Activated CD4-positive, alpha-beta T cell treated with anti-CD3 and anti-CD28 coated beads for 36 hours (primary cell): ENCODE measurements at regions of chr2 and their contacts with region 1.

Region 1: DNA sequence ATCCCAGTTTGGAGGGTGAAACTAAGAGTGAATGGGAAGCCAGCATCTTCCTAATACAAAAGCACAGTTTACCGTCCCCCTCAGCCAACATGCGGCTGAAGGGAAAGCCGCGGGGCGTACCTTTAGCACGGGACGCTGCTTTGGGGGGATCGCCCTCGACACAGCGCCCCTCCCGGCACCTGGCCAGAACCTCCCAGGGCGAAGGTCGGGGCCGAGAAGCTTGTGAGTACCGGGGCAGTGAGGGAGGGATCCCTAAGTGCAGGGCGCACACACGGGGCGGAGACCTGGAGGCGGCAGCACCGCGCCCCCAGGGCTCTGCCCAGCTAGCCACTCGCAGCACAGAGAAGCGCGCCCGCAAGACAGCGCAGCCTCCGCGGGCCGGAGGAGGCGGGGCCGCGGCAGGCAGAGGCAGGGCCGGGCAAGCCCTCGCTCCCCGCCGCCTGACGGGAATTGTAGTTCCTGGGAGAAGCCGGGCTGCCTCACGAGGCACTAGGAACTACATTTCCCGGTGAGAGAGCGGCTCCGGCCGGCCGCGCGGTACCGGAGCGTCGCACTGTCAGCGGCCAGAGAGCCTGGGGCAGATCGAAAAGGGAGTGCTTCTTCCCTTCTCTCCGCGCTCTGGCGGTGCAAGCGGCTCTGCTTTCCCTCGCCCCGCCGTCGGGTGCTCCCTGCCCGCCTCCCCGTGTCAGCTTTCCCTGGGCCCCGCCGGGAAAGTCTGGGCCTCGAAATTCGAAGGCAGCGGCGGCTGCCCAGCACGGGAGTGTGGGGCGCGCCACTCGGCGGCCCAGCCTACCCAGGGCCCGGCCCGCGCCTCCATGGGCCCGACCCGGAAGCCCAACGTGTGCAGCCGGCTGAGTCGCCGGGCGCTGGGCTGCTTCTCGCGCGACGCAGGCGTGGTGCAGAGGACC is at the starts of genes DCAF17 and METTL8:
- DNase-seq: peak; percentile 97
- ATAC-seq: peak; percentile 91
- H3K4me3 Mint-ChIP-seq: peak within 1 kb of the TSS; percentile 93
- H3K27ac Mint-ChIP-seq: peak within 1 kb of the TSS; percentile 95
- H3K4me1 Mint-ChIP-seq: peaks cover 50% of the 10 kb centered on the region
- H3K27me3 Mint-ChIP-seq: no peaks in the 10 kb centered on the region
- total RNA-seq, gene DCAF17: 18.3 TPM
- total RNA-seq, gene METTL8: 39.5 to 47.9 TPM

Region 2: DNA sequence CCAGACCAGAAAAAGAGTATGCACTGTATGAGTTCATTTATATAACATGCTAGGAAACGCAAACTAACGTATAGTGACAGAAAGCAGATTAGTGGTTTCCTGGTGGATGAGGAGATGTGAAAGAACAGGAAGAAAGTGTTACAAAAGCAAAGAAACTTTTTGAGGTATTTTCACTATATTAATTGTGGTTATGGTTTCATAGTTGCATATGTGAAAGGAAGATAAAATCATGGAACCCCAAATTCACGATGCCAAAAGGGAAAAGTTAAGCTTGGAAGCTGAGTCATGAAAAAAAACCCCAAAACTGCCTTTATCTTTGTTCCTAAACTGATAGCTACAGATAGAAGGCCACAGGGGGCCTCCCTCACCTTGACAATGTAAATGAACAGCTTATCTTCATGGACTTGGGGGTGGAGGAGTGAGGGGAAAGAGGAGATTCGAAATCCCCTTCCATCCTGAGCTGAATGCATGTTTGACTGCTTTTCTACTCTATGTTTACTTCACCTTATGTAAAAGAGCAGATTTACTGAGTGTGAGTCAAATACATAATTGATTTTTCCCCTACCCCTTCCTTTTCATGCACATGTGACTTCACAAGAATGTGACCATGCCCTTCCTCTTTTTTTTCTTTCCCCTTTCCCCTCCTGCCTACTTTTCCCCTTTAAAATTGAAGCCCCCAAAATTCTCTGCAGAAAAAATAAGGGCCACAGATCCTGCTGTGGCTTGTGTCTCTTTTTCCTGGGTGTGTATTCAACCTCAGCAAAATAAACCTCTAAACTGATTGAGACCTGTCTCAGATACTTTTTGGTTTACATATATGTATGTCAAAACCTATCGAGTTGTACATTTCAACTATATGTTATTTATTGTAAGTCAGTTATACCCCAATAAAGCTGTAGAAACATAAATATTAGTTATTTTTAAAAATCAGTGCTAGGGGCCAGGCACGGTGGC is 173.3 kb before region 1 on chr2:
- CTCF ChIA-PET with region 1: no interaction called
- POLR2A ChIA-PET with region 1: no interaction called
- intact Hi-C with region 1: loop called (anchors 5 kb)
- DNase-seq: peak; percentile 50
- ATAC-seq: peak; percentile 90
- H3K4me3 Mint-ChIP-seq: peak overlapping the region; percentile 34
- H3K27ac Mint-ChIP-seq: peak overlapping the region; percentile 64
- H3K4me1 Mint-ChIP-seq: peaks cover 34% of the 10 kb centered on the region
- H3K27me3 Mint-ChIP-seq: no peaks in the 10 kb centered on the region

Region 3: GRCh38 chr2:171365232-171365631 is 68.8 kb before region 1 on chr2:
- CTCF ChIA-PET with region 1: no interaction called
- POLR2A ChIA-PET with region 1: no interaction called
- intact Hi-C with region 1: no loop called
- DNase-seq: no peak
- ATAC-seq: no peak
- H3K4me3 Mint-ChIP-seq: no peak overlapping the region
- H3K27ac Mint-ChIP-seq: no peak overlapping the region
- H3K4me1 Mint-ChIP-seq: no peaks in the 10 kb centered on the region
- H3K27me3 Mint-ChIP-seq: no peaks in the 10 kb centered on the region

Region 4: DNA sequence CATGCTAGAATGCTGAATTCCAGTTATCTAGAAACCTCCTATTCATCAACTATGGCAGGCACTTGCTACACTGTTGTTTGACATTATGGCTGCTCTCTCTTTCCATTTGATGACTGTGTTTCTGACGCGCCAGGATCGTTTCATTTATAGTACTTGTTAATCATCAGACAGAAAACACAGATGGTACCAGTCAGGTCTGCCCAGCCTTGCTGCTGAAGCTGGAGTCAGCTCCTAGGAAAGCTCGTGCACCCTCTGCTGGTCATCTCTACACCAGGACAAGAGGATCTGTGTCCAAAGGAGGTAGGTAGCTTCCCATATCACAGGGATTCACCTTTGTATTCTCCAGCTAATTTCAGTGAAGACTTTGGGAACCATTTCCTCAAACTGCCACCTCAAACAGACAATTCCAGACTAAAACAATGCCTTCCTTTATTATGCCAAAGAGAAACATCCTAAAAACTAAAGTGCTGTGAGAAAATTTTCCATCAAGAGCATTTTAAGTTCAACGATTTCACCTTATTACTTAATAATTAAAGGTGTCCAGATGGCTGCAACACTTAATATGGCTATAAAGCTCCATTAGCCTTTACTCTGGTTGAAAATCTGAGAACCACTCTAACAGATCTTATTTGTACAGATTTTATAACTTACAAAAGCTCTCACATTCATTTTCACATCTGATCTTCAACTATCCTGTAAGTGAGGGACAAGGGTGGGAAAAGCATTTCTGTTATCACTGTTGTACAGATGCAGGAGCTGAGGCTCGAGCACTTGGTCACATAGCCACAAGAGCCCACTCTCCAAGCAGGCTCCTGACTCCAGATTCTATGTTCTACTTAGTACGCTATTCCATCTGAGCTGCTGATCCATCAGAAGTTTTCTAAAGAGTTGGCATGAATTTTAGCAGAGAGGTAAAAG is 17.7 kb before region 1 on chr2:
- CTCF ChIA-PET with region 1: interaction called, 41 read pairs
- POLR2A ChIA-PET with region 1: interaction called, 3 read pairs
- intact Hi-C with region 1: loop called (anchors 1 kb)
- DNase-seq: peak; percentile 93
- ATAC-seq: peak; percentile 98
- H3K4me3 Mint-ChIP-seq: peak overlapping the region; percentile 24
- H3K27ac Mint-ChIP-seq: peak overlapping the region; percentile 84
- H3K4me1 Mint-ChIP-seq: peaks cover 37% of the 10 kb centered on the region
- H3K27me3 Mint-ChIP-seq: no peaks in the 10 kb centered on the region

Region 5: GRCh38 chr2:171893824-171894611 is 460.0 kb after region 1 on chr2 and contains the start of gene SLC25A12:
- CTCF ChIA-PET with region 1: no interaction called
- POLR2A ChIA-PET with region 1: no interaction called
- intact Hi-C with region 1: loop called in 1 of 2 experiments (anchors 2 kb)
- DNase-seq: peak; percentile 88
- ATAC-seq: peak; percentile 98
- H3K4me3 Mint-ChIP-seq: peak within 1 kb of the TSS; percentile 100
- H3K27ac Mint-ChIP-seq: peak within 1 kb of the TSS; percentile 98
- H3K4me1 Mint-ChIP-seq: peaks cover 30% of the 10 kb centered on the region
- H3K27me3 Mint-ChIP-seq: no peaks in the 10 kb centered on the region
- total RNA-seq, gene SLC25A12: 19.5 to 22.4 TPM

Region 6: GRCh38 chr2:171922230-171923022 is 488.4 kb after region 1 on chr2 and contains the start of gene HAT1:
- CTCF ChIA-PET with region 1: no interaction called
- POLR2A ChIA-PET with region 1: no interaction called
- intact Hi-C with region 1: loop called in 1 of 2 experiments (anchors 10 kb)
- DNase-seq: peak; percentile 99
- ATAC-seq: peak; percentile 96
- H3K4me3 Mint-ChIP-seq: peak within 1 kb of the TSS; percentile 94
- H3K27ac Mint-ChIP-seq: peak within 1 kb of the TSS; percentile 98
- H3K4me1 Mint-ChIP-seq: peaks cover 38% of the 10 kb centered on the region
- H3K27me3 Mint-ChIP-seq: no peaks in the 10 kb centered on the region
- total RNA-seq, gene HAT1: 88.5 to 92.6 TPM

Region 7: DNA sequence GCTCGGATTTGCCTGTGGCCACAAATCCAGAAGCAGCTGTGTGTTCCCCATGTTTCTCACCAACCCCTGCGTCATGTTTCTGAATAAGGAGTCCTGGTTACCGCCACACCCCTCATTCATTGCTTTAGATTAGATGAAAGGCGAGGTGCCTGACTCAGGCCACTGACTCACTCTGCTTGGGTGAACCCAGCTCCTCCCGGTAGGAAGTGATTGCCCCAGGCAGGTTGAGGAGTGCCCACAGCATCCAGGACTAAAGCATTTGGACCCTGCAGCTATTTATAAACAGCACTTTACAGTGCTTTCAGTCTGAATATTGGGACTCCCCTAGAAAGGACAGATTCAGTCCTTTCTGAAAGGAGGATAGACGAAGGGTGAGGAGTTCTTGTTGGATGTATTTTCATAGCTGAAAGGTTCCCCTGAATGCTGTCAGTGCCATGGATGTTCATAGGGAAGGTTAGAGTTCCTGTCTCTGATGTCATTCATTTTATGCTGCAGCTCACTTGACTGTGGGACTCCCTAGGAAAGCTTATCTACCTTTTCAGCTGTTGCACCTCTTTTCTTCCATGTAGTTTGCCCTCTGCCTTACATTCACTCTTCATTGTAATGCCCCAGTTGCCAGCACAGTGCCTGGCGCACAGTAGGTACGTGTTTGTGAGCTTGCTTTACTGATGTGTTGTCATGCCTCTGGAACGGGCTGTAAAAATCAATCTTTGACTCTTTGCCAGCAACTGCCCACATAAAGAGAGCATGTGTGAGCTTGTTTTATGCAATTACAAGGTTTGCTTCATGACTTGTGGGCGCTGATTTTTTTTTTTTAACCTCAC is 1008.3 kb after region 1 on chr2:
- CTCF ChIA-PET with region 1: no interaction called
- POLR2A ChIA-PET with region 1: no interaction called
- intact Hi-C with region 1: loop called in 1 of 2 experiments (anchors 10 kb)
- DNase-seq: peak; percentile 82
- ATAC-seq: peak; percentile 70
- H3K4me3 Mint-ChIP-seq: peak overlapping the region; percentile 32
- H3K27ac Mint-ChIP-seq: peak overlapping the region; percentile 75
- H3K4me1 Mint-ChIP-seq: peaks cover 49% of the 10 kb centered on the region
- H3K27me3 Mint-ChIP-seq: no peaks in the 10 kb centered on the region